ENCODE measurements at regions of chr10 and their contacts with region 1.

Region 1: GRCh38 chr10:5854106-5854570 is 35.6 kb downstream of the ANKRD16 start:
- H3K4me3 Mint-ChIP-seq: no peak overlapping the region
- H3K27ac Mint-ChIP-seq: no peak overlapping the region
- H3K4me1 Mint-ChIP-seq: peaks cover 24% of the 10 kb centered on the region
- H3K27me3 Mint-ChIP-seq: peaks cover 1% of the 10 kb centered on the region

Region 2: DNA sequence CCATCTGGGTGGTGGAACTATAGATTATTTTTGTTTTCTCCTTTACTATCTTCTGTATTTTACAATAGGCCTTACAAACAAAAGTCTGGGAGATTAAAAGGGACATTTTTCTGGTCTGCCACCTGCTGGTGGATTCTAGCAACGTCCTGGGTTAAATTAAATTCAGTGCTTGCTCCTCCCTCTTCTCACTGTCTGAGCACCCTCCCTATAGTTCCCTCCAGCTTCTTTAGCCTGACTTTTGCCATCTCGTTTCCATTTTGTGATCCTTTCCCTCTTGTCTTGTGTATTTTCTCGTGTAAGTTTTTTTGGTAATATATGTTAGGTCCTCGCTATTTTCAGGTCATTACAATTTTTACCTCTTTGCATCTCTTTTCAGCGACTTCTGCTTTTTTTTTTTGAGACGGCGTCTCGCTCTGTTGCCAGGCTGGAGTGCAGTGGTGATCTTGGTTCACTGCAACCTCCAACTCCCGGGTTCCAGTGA is 19.4 kb after region 1 on chr10:
- intact Hi-C with region 1: loop called (anchors 1 kb)
- H3K4me3 Mint-ChIP-seq: peak overlapping the region; percentile 77
- H3K27ac Mint-ChIP-seq: peak overlapping the region; percentile 71
- H3K4me1 Mint-ChIP-seq: peaks cover 15% of the 10 kb centered on the region
- H3K27me3 Mint-ChIP-seq: no peaks in the 10 kb centered on the region